ENCODE measurements at regions of chr2 and their contacts with region 1.

Region 1: DNA sequence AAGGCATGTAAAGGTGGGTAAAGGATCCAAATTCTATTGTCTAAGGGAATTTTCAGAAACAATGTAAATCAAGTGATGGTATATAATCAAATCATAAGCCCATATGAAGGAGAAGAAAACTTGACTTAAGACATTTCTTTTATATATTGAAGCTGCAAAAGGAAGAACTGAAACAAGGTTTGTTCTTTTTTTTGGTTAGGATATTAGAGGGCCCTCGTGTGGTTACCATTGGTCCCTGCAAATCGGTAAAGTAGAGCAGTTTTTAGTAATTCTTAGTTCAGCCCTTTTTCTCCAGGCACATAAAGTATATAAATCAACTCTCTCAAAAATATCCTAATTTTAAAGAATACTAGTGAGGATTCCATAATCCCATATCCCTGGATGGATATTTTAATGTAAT is 105.6 kb upstream of the STK17B start:
- DNase-seq: peak; percentile 60 to 79 (median 77)
- H3K4me3 ChIP-seq: no peak overlapping the region
- H3K27ac ChIP-seq: no peak overlapping the region
- H3K4me1 ChIP-seq: peaks cover 11 to 29% (median 21%) of the 10 kb centered on the region in 4 experiments
- H3K27me3 ChIP-seq: no peaks in the 10 kb centered on the region

Region 2: GRCh38 chr2:195343942-195344530 is 933.0 kb before region 1 on chr2:
- CTCF ChIA-PET with region 1: no interaction called
- POLR2A ChIA-PET with region 1: no interaction called
- DNase-seq: no peak
- H3K4me3 ChIP-seq: no peak overlapping the region
- H3K27ac ChIP-seq: no peak overlapping the region
- H3K4me1 ChIP-seq: peaks cover 0 to 3% (median 1%) of the 10 kb centered on the region in 4 experiments
- H3K27me3 ChIP-seq: no peaks in the 10 kb centered on the region

Region 3: GRCh38 chr2:196220671-196221070 is 56.3 kb before region 1 on chr2:
- CTCF ChIA-PET with region 1: interaction called, 14 read pairs
- POLR2A ChIA-PET with region 1: no interaction called
- DNase-seq: peak in 2 of 3 donors; percentile 35 to 43
- H3K4me3 ChIP-seq: no peak overlapping the region
- H3K27ac ChIP-seq: no peak overlapping the region
- H3K4me1 ChIP-seq: peaks cover 0 to 7% (median 3%) of the 10 kb centered on the region in 4 experiments
- H3K27me3 ChIP-seq: no peaks in the 10 kb centered on the region